ENCODE measurements at regions of chr16 and their contacts with region 1.

Region 1: GRCh38 chr16:30370444-30371247 is at the start of gene TBC1D10B:
- DNase-seq: peak; percentile 99
- ATAC-seq: peak; percentile 88
- H3K4me3 Mint-ChIP-seq: peak within 1 kb of the TSS; percentile 89
- H3K27ac Mint-ChIP-seq: peak within 1 kb of the TSS; percentile 97
- H3K4me1 Mint-ChIP-seq: peaks cover 40% of the 10 kb centered on the region
- H3K27me3 Mint-ChIP-seq: no peaks in the 10 kb centered on the region
- total RNA-seq, gene TBC1D10B: 38.1 to 43.4 TPM

Region 2: DNA sequence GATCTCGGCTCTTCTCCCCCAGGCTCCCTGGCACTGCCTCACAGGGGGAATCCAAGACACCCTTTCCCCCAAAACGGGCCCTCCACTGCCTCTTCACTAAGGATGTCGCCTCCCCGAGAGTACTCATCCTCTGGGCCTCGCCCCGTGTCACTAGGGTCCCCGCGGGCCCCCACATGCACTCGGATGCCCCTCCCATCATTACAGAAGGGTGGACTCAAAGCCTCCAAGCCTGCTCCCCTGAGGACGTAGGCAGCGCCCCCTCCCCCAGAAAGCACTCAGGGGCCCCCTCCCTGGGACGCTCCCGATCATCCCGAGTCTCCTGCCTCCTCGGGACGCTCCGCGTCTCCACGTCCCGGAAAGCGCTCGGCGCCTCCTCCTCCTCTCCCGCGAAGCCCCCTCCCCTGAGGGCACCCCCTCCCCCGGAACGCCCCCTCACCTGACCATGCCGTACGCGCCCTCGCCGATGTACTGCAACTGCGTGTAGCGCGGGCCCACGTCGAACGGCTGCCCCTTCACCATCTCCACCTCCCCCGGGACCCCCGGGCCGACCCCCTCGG is 248.0 kb before region 1 on chr16:
- CTCF ChIA-PET with region 1: no interaction called
- POLR2A ChIA-PET with region 1: no interaction called
- intact Hi-C with region 1: loop called in 1 of 2 experiments (anchors 1 kb)
- DNase-seq: peak; percentile 35
- ATAC-seq: peak; percentile 37
- H3K4me3 Mint-ChIP-seq: peak overlapping the region; percentile 87
- H3K27ac Mint-ChIP-seq: peak overlapping the region; percentile 89
- H3K4me1 Mint-ChIP-seq: peaks cover 17% of the 10 kb centered on the region
- H3K27me3 Mint-ChIP-seq: no peaks in the 10 kb centered on the region

Region 3: GRCh38 chr16:30355144-30355894 is 15.3 kb before region 1 on chr16 and contains the start of gene CD2BP2:
- CTCF ChIA-PET with region 1: interaction called, 7 read pairs
- POLR2A ChIA-PET with region 1: interaction called, 7 read pairs
- intact Hi-C with region 1: loop called (anchors 1 kb)
- DNase-seq: peak; percentile 94
- ATAC-seq: peak; percentile 88
- H3K4me3 Mint-ChIP-seq: peak within 1 kb of the TSS; percentile 90
- H3K27ac Mint-ChIP-seq: peak within 1 kb of the TSS; percentile 94
- H3K4me1 Mint-ChIP-seq: peaks cover 32% of the 10 kb centered on the region
- H3K27me3 Mint-ChIP-seq: no peaks in the 10 kb centered on the region
- total RNA-seq, gene CD2BP2: 42.3 to 51.8 TPM

Region 4: DNA sequence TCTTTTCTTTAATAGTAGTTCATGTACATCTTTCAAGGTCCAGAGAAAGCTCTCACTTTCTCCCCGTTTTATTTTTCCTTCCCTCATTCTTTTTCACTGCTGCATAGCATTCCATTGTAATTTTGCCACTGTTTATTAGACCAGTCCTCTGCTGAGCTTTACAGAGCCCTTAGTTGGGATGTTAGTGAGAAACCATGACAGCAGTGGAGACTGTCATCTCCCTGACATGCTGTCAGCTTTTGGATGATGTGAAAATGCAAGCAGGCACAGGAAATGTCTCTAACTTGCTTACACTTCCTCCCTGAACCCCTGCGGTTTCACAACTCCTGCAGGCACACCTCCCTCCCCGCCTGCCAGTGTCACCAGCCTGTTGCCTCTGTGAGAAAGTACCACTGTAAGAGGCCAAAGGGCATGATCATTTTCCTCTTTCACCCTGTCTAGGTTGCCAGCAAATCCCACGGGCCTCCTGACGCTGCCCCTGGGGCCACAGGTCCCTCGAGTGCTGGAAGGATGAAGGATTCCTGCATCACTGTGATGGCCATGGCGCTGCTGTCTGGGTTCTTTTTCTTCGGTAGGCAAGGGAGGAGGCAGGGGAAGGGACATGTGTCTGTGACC is 101.8 kb after region 1 on chr16 and contains the start of gene ITGAL:
- CTCF ChIA-PET with region 1: interaction called, 3 read pairs
- POLR2A ChIA-PET with region 1: no interaction called
- intact Hi-C with region 1: loop called (anchors 2 to 5 kb)
- DNase-seq: peak; percentile 93
- ATAC-seq: peak; percentile 62
- H3K4me3 Mint-ChIP-seq: peak within 1 kb of the TSS; percentile 95
- H3K27ac Mint-ChIP-seq: peak within 1 kb of the TSS; percentile 99
- H3K4me1 Mint-ChIP-seq: peaks cover 63% of the 10 kb centered on the region
- H3K27me3 Mint-ChIP-seq: no peaks in the 10 kb centered on the region
- total RNA-seq, gene ITGAL: 210 to 222 TPM

Region 5: GRCh38 chr16:30650369-30651123 is 279.9 kb after region 1 on chr16 and contains the start of gene PRR14:
- CTCF ChIA-PET with region 1: no interaction called
- POLR2A ChIA-PET with region 1: interaction called, 3 read pairs
- intact Hi-C with region 1: loop called in 1 of 2 experiments (anchors 1 kb)
- DNase-seq: peak; percentile 100
- ATAC-seq: peak; percentile 82
- H3K4me3 Mint-ChIP-seq: peak within 1 kb of the TSS; percentile 95
- H3K27ac Mint-ChIP-seq: peak within 1 kb of the TSS; percentile 97
- H3K4me1 Mint-ChIP-seq: peaks cover 21% of the 10 kb centered on the region
- H3K27me3 Mint-ChIP-seq: no peaks in the 10 kb centered on the region
- total RNA-seq, gene PRR14: 76.8 to 77.8 TPM

Measured in activated CD4-positive, alpha-beta T cell treated with anti-CD3 and anti-CD28 coated beads for 36 hours (primary cell).